PC-9 (cell line): ENCODE measurements at regions of chr5 and their contacts with region 1.

Region 1: DNA sequence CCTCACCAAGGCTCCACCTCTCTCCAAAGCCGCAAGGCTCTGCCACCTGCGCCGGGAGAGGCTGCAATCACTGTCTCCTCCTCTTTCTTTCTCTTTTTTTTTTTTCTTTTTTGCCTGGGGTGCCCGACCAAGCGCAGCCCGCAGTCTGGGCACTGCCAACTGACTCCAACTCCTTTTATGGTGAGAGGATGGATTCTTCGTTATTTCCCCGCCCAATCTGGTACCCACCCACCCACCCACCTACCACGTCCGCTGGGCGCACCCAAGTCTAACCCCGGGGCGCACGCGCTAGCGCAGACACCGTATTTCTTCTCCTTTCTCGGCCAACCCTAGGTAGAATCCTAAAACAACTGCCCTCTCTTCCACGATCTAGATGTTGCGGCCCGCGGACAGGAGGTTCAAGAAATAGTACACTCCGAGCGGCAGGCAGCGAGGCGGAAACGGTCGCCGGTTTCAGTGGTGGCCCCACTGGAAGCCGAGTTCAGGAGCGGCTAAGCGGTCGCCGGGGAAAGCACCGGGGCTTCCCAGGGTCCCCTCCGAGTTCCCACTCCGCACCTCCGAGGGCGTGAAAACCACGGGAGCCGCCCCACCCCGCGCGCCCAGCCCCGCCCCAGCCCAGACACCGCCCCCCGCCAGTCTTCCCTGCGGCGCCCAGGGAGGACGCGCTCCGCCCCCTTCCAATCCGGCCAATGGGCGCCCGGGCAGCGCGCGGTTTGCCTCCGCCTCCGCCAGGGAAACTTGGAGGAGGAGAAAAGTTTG is 381 bp upstream of the PTGER4 start:
- DNase-seq: peak; percentile 97 to 100
- H3K4me3 ChIP-seq: peak overlapping the region; percentile 82
- H3K27ac ChIP-seq: peak overlapping the region; percentile 93
- H3K4me1 ChIP-seq: peaks cover 54% of the 10 kb centered on the region
- H3K27me3 ChIP-seq: no peaks in the 10 kb centered on the region
- CTCF ChIP-seq: no peak

Region 2: GRCh38 chr5:39755986-39756385 is 923.3 kb before region 1 on chr5:
- CTCF ChIA-PET with region 1: no interaction called
- POLR2A ChIA-PET with region 1: no interaction called
- intact Hi-C with region 1: loop called (anchors 5 kb)
- DNase-seq: peak; percentile 68 to 75
- H3K4me3 ChIP-seq: no peak overlapping the region
- H3K27ac ChIP-seq: peak overlapping the region; percentile 77
- H3K4me1 ChIP-seq: peaks cover 14% of the 10 kb centered on the region
- H3K27me3 ChIP-seq: no peaks in the 10 kb centered on the region
- CTCF ChIP-seq: no peak

Region 3: GRCh38 chr5:40404613-40405012 is 274.7 kb before region 1 on chr5:
- CTCF ChIA-PET with region 1: no interaction called
- POLR2A ChIA-PET with region 1: interaction called, 7 read pairs
- intact Hi-C with region 1: loop called (anchors 5 kb)
- DNase-seq: no peak
- H3K4me3 ChIP-seq: no peak overlapping the region
- H3K27ac ChIP-seq: 0 out of 2 replicates have a peak overlapping the region, but pooled peaks have one; percentile 8
- H3K4me1 ChIP-seq: peaks cover 40% of the 10 kb centered on the region
- H3K27me3 ChIP-seq: no peaks in the 10 kb centered on the region
- CTCF ChIP-seq: no peak

Region 4: DNA sequence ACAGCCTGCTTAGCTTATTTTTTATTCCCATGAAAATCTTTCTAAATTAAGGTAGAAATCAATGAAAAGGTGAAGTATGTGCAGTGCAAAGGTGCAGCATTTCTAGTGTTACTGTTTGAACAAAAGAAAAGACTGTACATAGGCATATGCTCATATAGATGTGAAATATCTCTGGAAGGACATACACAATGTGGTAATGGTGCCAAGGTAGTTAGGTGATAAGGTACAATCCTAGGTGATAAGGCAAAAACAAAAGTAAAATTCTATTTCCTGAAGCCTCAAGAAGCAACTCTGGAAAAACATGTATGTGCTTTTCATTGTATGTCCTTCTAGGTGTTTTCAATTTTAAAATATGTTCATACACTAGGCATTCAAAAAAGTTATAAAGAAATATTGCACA is 139.0 kb before region 1 on chr5:
- CTCF ChIA-PET with region 1: no interaction called
- POLR2A ChIA-PET with region 1: interaction called, 10 read pairs
- intact Hi-C with region 1: no loop called
- DNase-seq: no peak
- H3K4me3 ChIP-seq: no peak overlapping the region
- H3K27ac ChIP-seq: no peak overlapping the region
- H3K4me1 ChIP-seq: no peaks in the 10 kb centered on the region
- H3K27me3 ChIP-seq: no peaks in the 10 kb centered on the region
- CTCF ChIP-seq: no peak

Region 5: DNA sequence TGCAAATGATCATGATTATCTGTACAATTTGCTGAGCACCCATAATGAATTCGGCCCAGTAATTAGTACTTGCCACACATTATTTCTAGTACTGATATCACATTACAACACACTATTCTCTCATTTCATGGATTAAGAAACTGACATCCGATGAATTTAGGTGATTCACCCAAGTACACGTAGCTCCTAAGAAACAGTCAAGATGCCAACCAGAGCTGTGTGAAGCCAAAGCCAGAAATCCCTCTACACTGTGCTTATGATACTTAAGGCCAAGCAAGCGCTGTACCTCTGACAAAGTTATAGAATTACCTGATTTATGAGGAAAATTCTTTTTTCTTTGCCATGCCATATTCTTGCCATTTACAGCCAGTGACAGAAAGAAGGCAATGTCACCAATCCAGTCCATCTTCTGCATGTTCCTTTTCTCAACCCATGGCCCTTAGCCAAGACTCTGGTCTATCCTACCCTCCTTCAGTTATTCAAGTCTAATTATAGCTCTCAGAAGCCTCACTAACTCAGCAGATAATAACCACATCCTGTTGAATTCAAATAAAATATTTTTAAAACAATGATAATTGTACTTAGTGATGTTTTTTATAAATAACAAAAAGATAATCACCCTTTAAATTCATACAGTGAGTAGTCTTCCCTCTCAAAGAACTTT is 73.9 kb before region 1 on chr5:
- CTCF ChIA-PET with region 1: no interaction called
- POLR2A ChIA-PET with region 1: interaction called, 20 read pairs
- intact Hi-C with region 1: no loop called
- DNase-seq: no peak
- H3K4me3 ChIP-seq: no peak overlapping the region
- H3K27ac ChIP-seq: no peak overlapping the region
- H3K4me1 ChIP-seq: no peaks in the 10 kb centered on the region
- H3K27me3 ChIP-seq: no peaks in the 10 kb centered on the region
- CTCF ChIP-seq: no peak

Region 6: DNA sequence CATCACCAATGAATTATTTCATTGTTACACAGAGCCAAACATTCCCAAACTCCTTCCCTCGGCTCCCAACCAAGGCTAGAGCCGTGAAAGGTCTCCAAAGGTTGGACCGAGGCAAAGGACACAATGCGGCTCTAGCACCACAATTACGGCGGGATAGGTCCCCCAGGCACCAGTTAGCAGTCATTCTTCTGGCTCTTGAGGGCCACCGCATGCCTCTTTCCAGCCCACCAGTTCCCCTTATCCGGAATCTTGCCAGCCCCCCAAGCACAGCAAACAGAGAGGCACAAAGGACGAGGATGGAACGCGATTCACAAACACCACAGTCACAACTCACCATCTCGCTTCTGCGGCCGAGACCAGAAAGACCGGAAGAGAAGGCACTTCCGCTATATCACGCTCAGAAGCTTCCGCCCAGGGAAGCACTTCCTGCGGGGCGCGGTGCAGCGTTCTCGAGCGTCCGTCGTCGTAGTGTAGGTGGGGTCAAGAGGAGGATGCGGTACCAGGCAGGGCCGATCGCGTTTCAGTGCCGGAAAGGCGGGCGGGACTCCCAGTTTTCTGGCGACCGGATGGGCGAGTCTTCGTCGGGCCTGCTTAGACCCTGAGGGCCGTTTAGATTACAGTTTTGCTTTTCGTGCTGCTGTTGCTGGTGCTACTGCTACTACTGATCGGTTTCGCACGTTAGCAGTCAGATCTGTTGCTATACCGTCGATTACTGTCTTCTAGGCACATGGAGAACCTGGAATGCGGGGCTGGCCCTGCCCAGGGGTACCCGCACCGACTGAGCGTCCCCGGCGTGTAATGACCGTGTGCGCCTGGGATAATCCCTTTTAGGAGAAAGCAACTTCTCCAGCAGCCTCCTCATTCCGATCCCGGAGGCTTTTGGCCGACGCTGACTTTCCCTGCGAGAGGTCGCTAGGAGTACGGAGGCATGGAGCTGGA is 155.8 kb after region 1 on chr5 and contains the start of gene RPL37:
- CTCF ChIA-PET with region 1: no interaction called
- POLR2A ChIA-PET with region 1: no interaction called
- intact Hi-C with region 1: loop called (anchors 1 kb)
- DNase-seq: peak; percentile 97 to 100
- H3K4me3 ChIP-seq: peak within 1 kb of the TSS; percentile 86
- H3K27ac ChIP-seq: peak within 1 kb of the TSS; percentile 96
- H3K4me1 ChIP-seq: peaks cover 43% of the 10 kb centered on the region
- H3K27me3 ChIP-seq: no peaks in the 10 kb centered on the region
- CTCF ChIP-seq: no peak
- total RNA-seq, gene RPL37: 3,889 and 3,938 TPM in 2 replicates